Left ventricle myocardium inferior (tissue), 1 donor: ENCODE measurements at regions of chr2 and their contacts with region 1.

Region 1: DNA sequence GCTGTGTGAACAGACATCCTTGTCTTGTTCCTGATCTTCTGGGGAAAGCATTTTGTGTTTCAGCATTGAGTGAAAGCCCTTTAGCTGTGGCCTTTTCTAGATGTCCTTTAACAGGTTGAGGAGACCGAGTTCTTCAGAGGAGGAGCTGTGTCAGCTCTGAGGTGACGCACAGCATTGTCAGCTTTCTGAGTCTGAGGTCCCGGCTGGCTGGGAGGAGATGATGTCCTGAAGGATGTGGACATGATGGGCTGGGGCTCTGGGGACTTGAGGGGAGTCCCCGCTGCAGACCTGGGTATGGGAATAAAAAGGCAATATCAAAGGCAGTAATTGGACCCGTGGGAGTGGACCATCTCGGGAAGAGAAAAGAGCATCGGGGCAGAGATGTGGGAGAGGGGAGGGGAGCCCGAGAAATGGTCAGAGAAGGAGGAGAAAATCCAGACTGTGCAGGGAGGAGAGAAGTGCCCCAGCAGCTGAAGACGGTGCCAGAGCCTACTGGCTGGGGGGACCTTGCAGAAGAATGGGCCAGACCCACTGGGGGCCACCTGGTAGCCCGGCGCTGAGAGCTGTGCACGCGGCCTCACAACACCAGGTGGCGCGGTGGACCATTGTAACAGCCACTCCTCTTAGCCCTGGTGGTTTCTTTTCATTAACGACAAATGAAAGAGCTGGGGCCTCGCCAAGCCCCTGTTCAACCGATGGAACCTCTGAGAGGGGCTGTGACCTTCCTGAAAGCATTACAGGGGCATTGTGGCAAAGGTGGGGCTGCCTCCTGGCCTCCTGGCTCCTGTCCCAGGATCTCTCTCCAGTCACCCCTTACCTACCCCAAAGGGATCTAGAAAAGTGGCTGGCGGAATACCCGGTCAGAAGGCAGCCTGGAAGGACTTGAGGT is 61.6 kb downstream of the ST3GAL5 start:
- DNase-seq: peak; percentile 74
- H3K4me3 ChIP-seq: peak overlapping the region; percentile 32
- H3K27ac ChIP-seq: no peak overlapping the region
- H3K4me1 ChIP-seq: peaks cover 10% of the 10 kb centered on the region
- H3K27me3 ChIP-seq: no peaks in the 10 kb centered on the region
- CTCF ChIP-seq: peak; percentile 96

Region 2: GRCh38 chr2:85266146-85267041 is 560.8 kb before region 1 on chr2:
- intact Hi-C with region 1: no loop called
- DNase-seq: peak; percentile 74
- H3K4me3 ChIP-seq: no peak overlapping the region
- H3K27ac ChIP-seq: peak overlapping the region; percentile 76
- H3K4me1 ChIP-seq: peaks cover 88% of the 10 kb centered on the region
- H3K27me3 ChIP-seq: no peaks in the 10 kb centered on the region
- CTCF ChIP-seq: peak; percentile 88

Region 3: DNA sequence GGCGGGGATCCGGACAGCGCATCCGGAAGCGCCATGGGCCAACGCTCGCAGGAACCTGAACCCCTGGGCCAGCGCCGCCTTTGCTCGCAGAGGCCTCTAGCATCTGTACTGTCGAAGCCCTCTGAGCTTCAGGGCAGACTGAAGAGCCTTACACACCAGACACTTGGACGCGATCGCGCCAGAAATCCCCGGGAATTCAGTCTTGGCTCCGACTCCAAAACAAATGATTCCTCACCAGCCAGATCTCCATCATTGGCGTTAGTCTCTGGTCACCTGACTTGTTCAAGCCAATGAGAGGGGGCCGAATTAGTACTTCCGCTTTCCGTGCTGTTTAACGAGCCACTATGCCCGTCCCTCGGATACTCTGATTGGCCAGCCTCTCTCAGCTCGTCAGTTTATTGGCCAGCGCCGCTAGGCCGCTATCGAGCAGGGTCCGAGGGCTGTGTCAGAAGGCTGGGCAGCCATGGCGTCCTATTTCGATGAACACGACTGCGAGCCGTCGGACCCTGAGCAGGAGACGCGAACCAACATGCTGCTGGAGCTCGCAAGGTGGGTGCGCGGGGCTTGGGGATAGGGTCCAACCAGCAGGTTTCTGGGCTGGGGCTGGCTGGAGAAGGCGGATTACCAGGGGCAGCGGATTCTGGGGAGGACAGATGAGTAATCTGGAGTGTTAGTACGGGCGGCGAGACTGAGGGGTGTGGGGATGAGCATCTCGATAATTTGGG is 231.8 kb before region 1 on chr2 and contains the start of gene RNF181:
- intact Hi-C with region 1: no loop called
- DNase-seq: peak; percentile 93
- H3K4me3 ChIP-seq: peak within 1 kb of the TSS; percentile 91
- H3K27ac ChIP-seq: peak within 1 kb of the TSS; percentile 93
- H3K4me1 ChIP-seq: peaks cover 59% of the 10 kb centered on the region
- H3K27me3 ChIP-seq: no peaks in the 10 kb centered on the region
- CTCF ChIP-seq: no peak
- total RNA-seq, gene RNF181: 89.2 TPM

Region 4: GRCh38 chr2:85655961-85656417 is 171.2 kb before region 1 on chr2:
- intact Hi-C with region 1: no loop called
- DNase-seq: no peak
- H3K4me3 ChIP-seq: no peak overlapping the region
- H3K27ac ChIP-seq: no peak overlapping the region
- H3K4me1 ChIP-seq: peaks cover 9% of the 10 kb centered on the region
- H3K27me3 ChIP-seq: no peaks in the 10 kb centered on the region
- CTCF ChIP-seq: no peak

Region 5: GRCh38 chr2:85888684-85889626 is 61.7 kb after region 1 on chr2 and contains the start of gene ST3GAL5:
- intact Hi-C with region 1: loop called (anchors 10 kb)
- DNase-seq: peak; percentile 94
- H3K4me3 ChIP-seq: peak within 1 kb of the TSS; percentile 89
- H3K27ac ChIP-seq: peak within 1 kb of the TSS; percentile 84
- H3K4me1 ChIP-seq: peaks cover 74% of the 10 kb centered on the region
- H3K27me3 ChIP-seq: peaks cover 27% of the 10 kb centered on the region
- CTCF ChIP-seq: peak; percentile 66
- total RNA-seq, gene ST3GAL5: 4.2 TPM

Region 6: DNA sequence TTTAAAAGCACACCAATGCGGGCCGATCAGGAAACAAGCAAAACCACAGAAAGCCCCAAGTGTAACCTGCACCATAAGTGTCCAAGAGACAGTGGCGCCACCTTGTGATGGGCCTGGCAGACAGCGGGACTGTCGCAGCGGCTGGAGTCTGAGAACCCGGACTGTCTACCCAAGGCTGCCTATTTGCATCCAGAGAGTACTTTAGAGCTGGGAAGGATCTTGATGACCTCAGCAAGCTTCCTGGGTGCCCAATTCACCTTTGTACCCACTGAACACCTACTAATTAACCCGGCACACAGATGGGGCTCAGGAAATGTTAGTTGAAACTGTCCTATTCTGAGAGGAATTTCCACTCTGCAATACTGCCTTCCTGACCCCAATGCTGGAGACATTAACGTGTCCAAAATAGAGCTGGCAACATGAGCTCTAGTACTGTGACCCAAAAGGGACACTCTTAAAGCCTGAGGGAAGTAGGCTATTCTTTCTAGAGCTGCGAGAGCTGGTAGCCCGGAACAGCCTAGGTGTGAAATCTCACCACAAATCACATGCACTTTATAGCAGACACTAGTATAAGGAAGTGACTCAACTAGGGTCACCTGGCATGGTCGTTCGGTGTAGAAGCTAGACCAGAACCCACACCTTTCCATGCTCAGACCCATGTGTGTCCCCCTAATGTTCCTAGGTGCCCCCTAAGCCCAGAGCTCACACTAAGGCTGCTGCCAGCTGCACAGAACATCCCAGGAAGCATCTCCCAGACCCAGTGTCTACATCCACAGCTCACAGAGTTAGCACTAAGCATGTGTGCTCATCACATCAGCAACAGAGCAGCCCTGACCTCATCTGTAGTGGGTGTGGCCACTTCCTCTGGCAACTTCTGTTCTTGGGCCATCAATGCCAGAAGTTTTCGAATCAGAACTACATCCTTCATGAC is 253.0 kb after region 1 on chr2:
- intact Hi-C with region 1: loop called (anchors 5 kb)
- DNase-seq: peak; percentile 82
- H3K4me3 ChIP-seq: no peak overlapping the region
- H3K27ac ChIP-seq: no peak overlapping the region
- H3K4me1 ChIP-seq: peaks cover 17% of the 10 kb centered on the region
- H3K27me3 ChIP-seq: no peaks in the 10 kb centered on the region
- CTCF ChIP-seq: peak; percentile 87

Region 7: DNA sequence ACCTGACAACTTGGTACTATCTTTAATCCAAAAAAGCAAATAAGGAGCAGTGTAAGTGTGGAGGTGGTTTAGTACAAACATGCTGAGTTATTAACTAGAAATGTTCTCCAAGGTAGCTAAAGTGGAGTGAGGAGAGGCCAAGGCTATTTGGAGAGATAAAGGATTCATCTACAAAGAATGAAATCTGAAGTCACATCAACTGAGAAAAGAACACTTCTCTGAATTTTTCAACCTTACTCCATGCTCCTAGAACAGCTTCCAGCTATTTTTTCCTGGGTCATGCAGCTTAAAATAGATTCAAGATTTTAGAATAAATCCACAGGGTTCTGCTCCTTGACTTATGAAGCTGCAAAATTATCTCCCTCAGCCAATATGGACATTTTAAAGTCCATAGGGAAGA is 349.4 kb after region 1 on chr2:
- intact Hi-C with region 1: no loop called
- DNase-seq: no peak
- H3K4me3 ChIP-seq: no peak overlapping the region
- H3K27ac ChIP-seq: peak overlapping the region; percentile 0
- H3K4me1 ChIP-seq: peaks cover 38% of the 10 kb centered on the region
- H3K27me3 ChIP-seq: no peaks in the 10 kb centered on the region
- CTCF ChIP-seq: no peak